ENCODE measurements at regions of chr1 and their contacts with region 1.

Region 1: GRCh38 chr1:152001391-152002249 is 8.0 kb upstream of the S100A10 start:
- DNase-seq: peak; percentile 87
- H3K4me3 ChIP-seq: no peak overlapping the region
- H3K27ac ChIP-seq: no peak overlapping the region
- H3K4me1 ChIP-seq: no peaks in the 10 kb centered on the region
- H3K27me3 ChIP-seq: peaks cover 24 to 32% of the 10 kb centered on the region in 2 experiments
- CTCF ChIP-seq: peak; percentile 89 to 91
- POLR2A ChIP-seq: no peak

Region 2: DNA sequence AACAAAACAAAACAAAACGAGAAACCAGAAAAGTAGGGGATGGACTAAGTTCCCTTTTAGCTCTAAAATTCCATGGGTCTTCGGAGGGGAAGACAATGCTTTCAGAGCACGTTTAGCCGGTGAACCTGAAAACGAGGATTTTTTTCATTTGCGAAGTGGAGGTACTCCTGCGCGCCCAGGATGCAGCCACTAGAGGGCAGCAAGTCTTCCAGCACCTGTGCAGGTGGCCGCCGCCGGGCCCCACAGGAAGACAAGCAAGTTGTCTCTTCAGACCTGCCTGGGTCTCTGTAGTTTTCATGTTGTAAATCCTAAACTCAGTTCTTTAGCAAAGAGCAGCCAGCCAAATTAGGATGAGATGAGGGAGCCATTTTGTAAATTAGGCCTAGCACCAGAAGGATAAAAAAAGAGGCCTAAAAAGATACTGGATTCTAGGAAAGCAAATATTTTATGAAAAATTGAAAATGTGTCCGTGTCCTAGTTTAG is 407.4 kb before region 1 on chr1:
- CTCF ChIA-PET with region 1: no interaction called
- POLR2A ChIA-PET with region 1: no interaction called
- dilution Hi-C with region 1: no loop called
- intact Hi-C with region 1: loop called (anchors 1 kb)
- DNase-seq: peak; percentile 51
- H3K4me3 ChIP-seq: no peak overlapping the region
- H3K27ac ChIP-seq: no peak overlapping the region
- H3K4me1 ChIP-seq: no peaks in the 10 kb centered on the region
- H3K27me3 ChIP-seq: no peaks in the 10 kb centered on the region
- CTCF ChIP-seq: peak; percentile 94 to 95
- POLR2A ChIP-seq: no peak

Region 3: DNA sequence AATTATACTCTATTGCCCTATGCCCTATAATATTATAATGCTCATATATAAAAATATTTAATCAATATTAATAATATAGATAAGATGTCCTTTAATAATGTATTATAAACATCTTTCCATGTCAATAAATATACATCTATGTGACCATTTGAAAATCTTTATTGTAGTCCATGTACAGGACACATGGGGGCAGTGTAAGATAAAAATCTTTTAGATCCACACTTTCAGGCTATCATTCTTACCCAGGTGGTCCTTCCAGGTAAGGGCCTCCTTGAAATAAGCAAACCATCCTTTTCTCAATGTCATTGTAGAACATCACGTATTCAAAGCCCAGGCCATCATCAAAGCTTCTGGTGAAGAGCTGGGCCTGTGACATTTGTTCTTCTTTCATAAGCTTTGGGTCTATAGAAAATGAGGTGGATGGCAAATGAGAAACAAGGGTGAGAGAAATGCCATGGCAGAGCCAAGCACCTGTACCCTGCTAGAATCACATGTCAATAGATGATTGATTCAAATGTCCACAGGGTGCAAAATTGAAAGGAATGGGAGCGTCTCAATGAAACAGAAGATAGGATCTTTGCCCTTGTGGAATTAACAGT is 112.5 kb before region 1 on chr1:
- CTCF ChIA-PET with region 1: interaction called, 128 read pairs
- POLR2A ChIA-PET with region 1: interaction called, 3 read pairs
- dilution Hi-C with region 1: no loop called
- intact Hi-C with region 1: loop called (anchors 1 kb)
- DNase-seq: peak; percentile 28
- H3K4me3 ChIP-seq: no peak overlapping the region
- H3K27ac ChIP-seq: no peak overlapping the region
- H3K4me1 ChIP-seq: peaks cover 15% of the 10 kb centered on the region
- H3K27me3 ChIP-seq: no peaks in the 10 kb centered on the region
- CTCF ChIP-seq: peak; percentile 20 to 22
- POLR2A ChIP-seq: no peak

Region 4: DNA sequence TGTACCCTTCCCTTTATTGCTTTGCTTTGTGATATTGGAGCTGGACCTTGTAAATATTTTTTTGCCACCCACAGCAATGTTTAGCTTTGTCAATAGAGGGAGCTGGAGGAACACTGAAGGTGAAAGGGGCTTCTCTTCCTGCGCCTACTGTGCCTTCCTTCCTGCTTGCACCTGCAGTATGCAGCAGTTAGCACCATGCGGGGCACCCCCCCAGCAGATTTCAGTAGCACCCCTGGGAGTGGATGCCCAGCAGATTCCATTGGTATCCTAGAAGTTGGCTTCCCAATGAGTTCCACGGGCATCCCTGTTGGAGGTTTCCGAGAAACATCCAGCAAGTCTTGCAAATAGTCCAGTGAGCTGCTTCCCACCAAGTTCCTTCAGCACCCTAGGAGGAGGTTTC is 33.6 kb before region 1 on chr1:
- CTCF ChIA-PET with region 1: interaction called, 435 read pairs
- POLR2A ChIA-PET with region 1: no interaction called
- dilution Hi-C with region 1: no loop called
- intact Hi-C with region 1: loop called (anchors 1 kb)
- DNase-seq: peak; percentile 56
- H3K4me3 ChIP-seq: no peak overlapping the region
- H3K27ac ChIP-seq: no peak overlapping the region
- H3K4me1 ChIP-seq: peaks cover 21% of the 10 kb centered on the region
- H3K27me3 ChIP-seq: no peaks in the 10 kb centered on the region
- CTCF ChIP-seq: peak; percentile 55 to 60
- POLR2A ChIP-seq: no peak

Region 5: GRCh38 chr1:152013664-152014237 is 12.1 kb after region 1 on chr1:
- CTCF ChIA-PET with region 1: interaction called, 13 read pairs
- POLR2A ChIA-PET with region 1: no interaction called
- dilution Hi-C with region 1: no loop called
- intact Hi-C with region 1: no loop called
- DNase-seq: peak; percentile 48
- H3K4me3 ChIP-seq: no peak overlapping the region
- H3K27ac ChIP-seq: no peak overlapping the region
- H3K4me1 ChIP-seq: no peaks in the 10 kb centered on the region
- H3K27me3 ChIP-seq: peaks cover 10 to 36% of the 10 kb centered on the region in 2 experiments
- CTCF ChIP-seq: peak; percentile 63 to 81
- POLR2A ChIP-seq: no peak